HEK293T (cell line): ENCODE measurements at regions of chr17 and their contacts with region 1.

Region 1: DNA sequence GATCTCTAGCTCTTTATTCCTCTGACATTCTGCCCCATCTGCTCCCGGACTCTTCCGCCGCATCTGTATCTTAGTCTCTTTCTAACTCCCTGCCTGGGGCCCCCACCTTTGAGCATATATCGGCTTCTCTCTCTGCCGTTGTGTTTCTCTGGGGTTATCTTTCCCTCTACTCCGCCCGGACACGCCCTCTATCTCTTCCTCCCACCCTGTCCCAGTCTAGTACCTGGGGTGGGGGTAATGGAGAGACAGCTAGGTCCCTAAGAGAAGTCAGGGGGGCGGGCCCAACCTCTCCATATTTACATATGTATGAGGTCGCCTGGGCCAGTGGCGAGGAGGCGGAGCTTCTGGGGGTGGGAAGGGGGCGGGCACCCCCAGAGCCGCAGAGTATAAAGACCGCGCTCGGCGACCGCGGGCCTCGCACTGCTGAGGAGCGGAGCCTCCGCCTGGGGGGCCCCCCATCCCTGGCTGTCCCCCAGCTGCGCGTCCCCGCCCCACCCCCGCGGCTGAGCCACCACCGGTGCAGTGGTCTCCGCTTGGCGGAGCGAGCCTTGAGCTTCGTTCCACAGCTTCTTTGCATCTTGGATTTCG is at the start of gene ATP1B2:
- DNase-seq: peak; percentile 87

Region 2: GRCh38 chr17:7627250-7628121 is 23.1 kb before region 1 on chr17 and contains the start of gene SAT2:
- CTCF ChIA-PET with region 1: interaction called, 10 read pairs
- POLR2A ChIA-PET with region 1: interaction called, 13 read pairs
- DNase-seq: peak; percentile 96

Region 3: GRCh38 chr17:7632492-7632894 is 18.1 kb before region 1 on chr17:
- CTCF ChIA-PET with region 1: interaction called, 10 read pairs
- POLR2A ChIA-PET with region 1: interaction called, 13 read pairs
- DNase-seq: peak; percentile 68

Region 4: GRCh38 chr17:7823581-7824397 is 173.2 kb after region 1 on chr17:
- CTCF ChIA-PET with region 1: no interaction called
- POLR2A ChIA-PET with region 1: no interaction called
- DNase-seq: no peak